Mammary epithelial cell (primary cell): ENCODE measurements at regions of chr1 and their contacts with region 1.

Region 1: GRCh38 chr1:67280696-67281095 is 27.0 kb upstream of the IL12RB2 start:
- DNase-seq: no peak
- H3K4me3 ChIP-seq: no peak overlapping the region
- H3K27ac ChIP-seq: no peak overlapping the region
- H3K4me1 ChIP-seq: no peaks in the 10 kb centered on the region
- H3K27me3 ChIP-seq: no peaks in the 10 kb centered on the region
- CTCF ChIP-seq: no peak

Region 2: GRCh38 chr1:67031121-67031858 is 249.4 kb before region 1 on chr1:
- CTCF ChIA-PET with region 1: no interaction called
- dilution Hi-C with region 1: no loop called
- in situ Hi-C with region 1: no loop called
- intact Hi-C with region 1: no loop called
- DNase-seq: no peak
- H3K4me3 ChIP-seq: no peak overlapping the region
- H3K27ac ChIP-seq: no peak overlapping the region
- H3K4me1 ChIP-seq: no peaks in the 10 kb centered on the region
- H3K27me3 ChIP-seq: no peaks in the 10 kb centered on the region
- CTCF ChIP-seq: no peak

Region 3: DNA sequence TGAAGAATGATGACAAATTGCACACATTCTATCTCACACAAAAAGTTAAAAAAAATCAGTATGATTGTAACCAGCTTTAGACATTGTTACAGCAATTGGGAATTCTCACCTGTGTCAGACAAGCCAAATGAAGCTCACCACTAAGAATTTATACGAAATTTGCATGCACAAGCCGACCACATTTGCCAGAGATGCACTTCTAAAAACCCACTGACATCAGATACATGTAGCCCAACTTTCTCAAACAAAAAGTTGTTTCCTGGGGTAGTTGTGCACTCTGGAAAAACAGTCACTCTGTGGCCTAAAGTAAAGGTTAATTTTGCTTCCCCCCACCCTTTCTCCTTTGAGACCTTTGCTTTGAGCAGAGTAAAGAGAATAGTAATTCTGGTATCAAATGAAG is 41.0 kb before region 1 on chr1:
- CTCF ChIA-PET with region 1: no interaction called
- dilution Hi-C with region 1: loop called (anchors 5 kb)
- in situ Hi-C with region 1: no loop called
- intact Hi-C with region 1: no loop called
- DNase-seq: no peak
- H3K4me3 ChIP-seq: no peak overlapping the region
- H3K27ac ChIP-seq: no peak overlapping the region
- H3K4me1 ChIP-seq: no peaks in the 10 kb centered on the region
- H3K27me3 ChIP-seq: no peaks in the 10 kb centered on the region
- CTCF ChIP-seq: no peak

Region 4: DNA sequence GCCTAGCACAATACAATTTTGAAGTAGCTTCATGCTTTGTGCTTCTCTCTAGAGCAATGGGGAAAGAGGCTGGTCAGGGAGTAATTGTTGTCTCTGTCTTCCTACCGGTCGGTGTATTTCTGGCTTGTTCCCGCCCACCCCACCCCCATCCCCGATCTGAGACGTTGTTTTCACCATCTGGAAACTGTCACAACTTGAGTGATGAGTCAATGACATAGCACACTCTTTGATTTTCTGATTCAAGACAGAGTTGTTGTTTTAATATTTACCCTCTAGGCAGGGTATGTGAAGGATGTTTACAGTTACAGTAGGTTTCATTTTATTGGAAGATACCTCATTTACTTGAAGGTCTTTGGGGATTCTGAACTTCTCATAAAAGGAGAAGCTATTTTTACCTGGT is 34.0 kb after region 1 on chr1:
- CTCF ChIA-PET with region 1: no interaction called
- dilution Hi-C with region 1: loop called (anchors 5 kb)
- in situ Hi-C with region 1: no loop called
- intact Hi-C with region 1: no loop called
- DNase-seq: no peak
- H3K4me3 ChIP-seq: no peak overlapping the region
- H3K27ac ChIP-seq: no peak overlapping the region
- H3K4me1 ChIP-seq: peaks cover 6% of the 10 kb centered on the region
- H3K27me3 ChIP-seq: no peaks in the 10 kb centered on the region
- CTCF ChIP-seq: no peak

Region 5: DNA sequence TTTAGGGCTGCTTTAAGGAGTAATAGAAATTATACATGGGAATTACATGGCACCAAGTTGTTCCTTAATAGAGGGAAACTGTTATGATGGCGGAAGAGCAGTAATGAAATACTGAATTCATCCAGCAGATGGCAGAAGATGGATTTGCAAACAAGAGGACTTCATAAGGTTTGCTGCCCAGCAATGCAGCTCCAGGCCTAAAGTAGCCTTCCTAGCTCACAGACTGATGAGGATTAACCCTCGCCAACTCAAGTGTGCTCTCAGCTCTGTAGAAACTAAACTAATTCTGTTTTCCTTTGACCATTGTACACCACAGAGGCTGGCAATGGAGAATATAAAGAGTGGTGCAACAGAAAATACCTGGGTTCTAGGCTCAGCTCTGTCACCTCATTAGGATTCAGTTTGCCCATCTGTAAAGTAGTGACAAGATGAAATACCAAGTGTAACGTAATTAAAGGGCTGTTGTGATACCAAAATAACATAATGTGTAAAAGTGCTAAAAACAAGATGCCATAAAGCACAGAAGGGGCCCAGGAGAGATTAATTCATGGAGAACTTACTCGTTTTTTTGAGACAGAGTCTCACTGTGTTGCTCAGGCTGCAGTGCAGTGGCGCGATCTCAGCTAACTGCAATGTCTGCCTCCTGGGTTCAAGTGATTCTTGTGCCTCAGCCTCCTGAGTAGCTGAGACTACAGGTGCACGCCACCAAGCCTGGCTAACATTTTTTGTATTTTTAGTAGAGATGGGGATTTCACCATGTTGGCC is 251.9 kb after region 1 on chr1:
- CTCF ChIA-PET with region 1: no interaction called
- dilution Hi-C with region 1: no loop called
- in situ Hi-C with region 1: no loop called
- intact Hi-C with region 1: no loop called
- DNase-seq: peak; percentile 73
- H3K4me3 ChIP-seq: no peak overlapping the region
- H3K27ac ChIP-seq: no peak overlapping the region
- H3K4me1 ChIP-seq: peaks cover 31% of the 10 kb centered on the region
- H3K27me3 ChIP-seq: no peaks in the 10 kb centered on the region
- CTCF ChIP-seq: peak; percentile 70 to 72